Mammary epithelial cell (primary cell): ENCODE measurements at regions of chr17 and their contacts with region 1.

Region 1: DNA sequence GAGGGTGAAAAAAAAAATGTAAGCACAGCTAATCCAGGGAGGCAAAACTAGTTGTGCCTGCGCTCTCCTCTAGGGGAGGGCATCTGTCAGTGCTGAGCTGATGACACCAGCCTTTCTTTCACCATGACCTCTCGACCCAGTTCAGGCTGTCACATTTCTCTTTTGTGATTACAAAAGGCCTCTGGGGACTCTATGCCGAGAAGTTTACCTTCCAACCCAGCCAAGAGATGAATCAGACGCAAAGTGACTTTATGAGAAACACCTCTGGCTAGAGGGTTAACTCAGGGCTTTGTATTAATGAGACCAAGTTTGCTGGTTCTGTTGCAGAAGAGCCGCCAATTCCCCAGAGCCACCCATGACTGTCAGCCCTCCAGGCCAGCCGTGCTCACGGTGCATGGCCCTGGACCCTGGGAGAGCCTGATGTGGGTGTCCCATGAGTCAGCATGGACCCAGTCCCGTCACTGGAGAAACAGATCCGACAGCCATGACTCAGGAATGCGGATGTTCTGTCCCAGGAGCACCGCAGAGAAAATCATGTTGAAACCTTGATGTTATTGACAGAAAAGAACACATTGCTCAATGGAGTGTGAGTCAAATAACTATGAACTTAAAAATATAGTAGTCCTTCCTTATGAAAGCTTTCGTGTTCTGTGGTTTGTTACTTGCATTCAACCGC is 437.2 kb downstream of the HS3ST3B1 start:
- DNase-seq: peak; percentile 99
- H3K4me3 ChIP-seq: no peak overlapping the region
- H3K27ac ChIP-seq: peak overlapping the region; percentile 70
- H3K4me1 ChIP-seq: peaks cover 30% of the 10 kb centered on the region
- H3K27me3 ChIP-seq: no peaks in the 10 kb centered on the region
- CTCF ChIP-seq: peak; percentile 42 to 70

Region 2: GRCh38 chr17:13346996-13347765 is 1390.9 kb before region 1 on chr17:
- CTCF ChIA-PET with region 1: no interaction called
- dilution Hi-C with region 1: no loop called
- in situ Hi-C with region 1: no loop called
- intact Hi-C with region 1: loop called (anchors 2 kb)
- DNase-seq: peak; percentile 95
- H3K4me3 ChIP-seq: no peak overlapping the region
- H3K27ac ChIP-seq: peak overlapping the region; percentile 100
- H3K4me1 ChIP-seq: peaks cover 45% of the 10 kb centered on the region
- H3K27me3 ChIP-seq: no peaks in the 10 kb centered on the region
- CTCF ChIP-seq: no peak

Region 3: GRCh38 chr17:14308965-14309879 is 428.9 kb before region 1 on chr17:
- CTCF ChIA-PET with region 1: no interaction called
- dilution Hi-C with region 1: no loop called
- in situ Hi-C with region 1: no loop called
- intact Hi-C with region 1: loop called (anchors 5 kb)
- DNase-seq: peak; percentile 98
- H3K4me3 ChIP-seq: peak overlapping the region; percentile 58 to 83 (median 61)
- H3K27ac ChIP-seq: peak overlapping the region; percentile 52
- H3K4me1 ChIP-seq: peaks cover 15% of the 10 kb centered on the region
- H3K27me3 ChIP-seq: no peaks in the 10 kb centered on the region
- CTCF ChIP-seq: no peak

Region 4: DNA sequence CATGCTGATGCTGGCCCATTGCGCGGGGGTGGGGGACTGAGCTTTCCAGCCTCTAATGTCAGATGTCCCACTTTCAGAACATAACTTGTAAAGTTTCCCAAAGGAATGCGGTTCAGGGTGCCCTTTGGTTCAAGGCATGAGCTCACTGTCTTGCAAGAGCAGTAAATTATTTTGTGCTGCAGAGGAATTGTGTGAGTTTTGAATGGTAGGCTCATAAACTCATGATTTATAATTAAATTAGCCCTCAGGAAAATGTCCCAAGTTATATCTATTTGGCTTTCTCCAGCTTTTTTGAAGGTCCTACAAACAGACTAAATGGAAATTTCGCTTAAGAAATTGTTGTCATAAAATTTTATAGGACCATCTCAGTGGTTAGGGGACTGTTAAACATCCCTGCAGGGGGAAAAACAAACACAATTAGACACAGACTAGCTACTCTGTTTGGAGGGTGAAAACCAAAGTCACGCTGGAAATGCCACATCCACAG is 115.5 kb before region 1 on chr17:
- CTCF ChIA-PET with region 1: no interaction called
- dilution Hi-C with region 1: no loop called
- in situ Hi-C with region 1: no loop called
- intact Hi-C with region 1: loop called (anchors 5 kb)
- DNase-seq: peak; percentile 69
- H3K4me3 ChIP-seq: no peak overlapping the region
- H3K27ac ChIP-seq: no peak overlapping the region
- H3K4me1 ChIP-seq: peaks cover 25% of the 10 kb centered on the region
- H3K27me3 ChIP-seq: no peaks in the 10 kb centered on the region
- CTCF ChIP-seq: no peak

Region 5: GRCh38 chr17:14712611-14713021 is 25.5 kb before region 1 on chr17:
- CTCF ChIA-PET with region 1: no interaction called
- dilution Hi-C with region 1: no loop called
- in situ Hi-C with region 1: no loop called
- intact Hi-C with region 1: no loop called
- DNase-seq: peak; percentile 12
- H3K4me3 ChIP-seq: no peak overlapping the region
- H3K27ac ChIP-seq: no peak overlapping the region
- H3K4me1 ChIP-seq: no peaks in the 10 kb centered on the region
- H3K27me3 ChIP-seq: peaks cover 4% of the 10 kb centered on the region
- CTCF ChIP-seq: no peak

Region 6: DNA sequence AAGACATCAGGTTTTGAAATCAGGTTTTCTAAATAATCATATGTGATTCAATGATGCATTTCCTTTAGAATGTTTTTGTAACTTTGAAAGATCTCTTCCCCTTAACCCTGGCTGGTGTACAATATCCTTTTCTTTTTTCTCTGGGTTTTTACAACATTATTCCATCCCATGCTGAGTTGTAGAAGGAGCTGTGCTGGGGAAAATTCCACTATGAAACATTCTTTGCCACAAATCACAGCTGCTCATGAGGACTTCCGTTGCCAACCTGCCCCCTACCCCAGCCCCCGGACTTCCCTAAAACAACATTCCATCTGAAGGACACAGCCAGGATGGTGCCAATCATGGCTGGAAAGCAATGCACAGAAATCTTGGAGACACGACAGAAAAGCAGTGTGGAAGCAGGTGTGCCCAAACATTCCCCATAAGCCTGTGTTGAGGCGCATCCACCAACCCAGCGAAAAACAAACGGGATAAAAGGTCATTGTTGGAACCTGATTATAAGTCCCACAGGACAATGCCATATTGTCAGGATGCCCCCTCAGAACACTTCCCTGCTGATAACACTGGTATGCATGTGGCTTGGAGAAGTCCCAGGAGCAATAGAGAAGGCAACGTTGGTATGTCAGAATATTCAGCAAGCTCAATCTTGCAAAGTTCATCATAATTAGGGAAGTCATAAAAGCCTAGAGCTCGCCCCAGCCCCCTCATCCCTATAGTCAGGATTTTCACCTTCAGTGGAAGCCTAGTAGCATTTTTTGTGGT is 37.8 kb after region 1 on chr17:
- CTCF ChIA-PET with region 1: interaction called, 11 read pairs
- dilution Hi-C with region 1: no loop called
- in situ Hi-C with region 1: no loop called
- intact Hi-C with region 1: loop called (anchors 2 kb)
- DNase-seq: peak; percentile 92
- H3K4me3 ChIP-seq: peak overlapping the region in 1 of 3 experiments; percentile 3
- H3K27ac ChIP-seq: peak overlapping the region; percentile 92
- H3K4me1 ChIP-seq: peaks cover 33% of the 10 kb centered on the region
- H3K27me3 ChIP-seq: no peaks in the 10 kb centered on the region
- CTCF ChIP-seq: no peak

Region 7: GRCh38 chr17:14845591-14846281 is 107.6 kb after region 1 on chr17:
- CTCF ChIA-PET with region 1: no interaction called
- dilution Hi-C with region 1: no loop called
- in situ Hi-C with region 1: no loop called
- intact Hi-C with region 1: loop called (anchors 2 kb)
- DNase-seq: peak; percentile 94
- H3K4me3 ChIP-seq: peak overlapping the region; percentile 4 to 30 (median 26)
- H3K27ac ChIP-seq: peak overlapping the region; percentile 70
- H3K4me1 ChIP-seq: peaks cover 33% of the 10 kb centered on the region
- H3K27me3 ChIP-seq: no peaks in the 10 kb centered on the region
- CTCF ChIP-seq: no peak